ENCODE measurements at regions of chr6 and their contacts with region 1.

Region 1: GRCh38 chr6:36724514-36725390 is 27.1 kb downstream of the RAB44 start:
- DNase-seq: peak; percentile 82
- H3K4me3 Mint-ChIP-seq: no peak overlapping the region
- H3K27ac Mint-ChIP-seq: no peak overlapping the region
- H3K4me1 Mint-ChIP-seq: peaks cover 18% of the 10 kb centered on the region
- H3K27me3 Mint-ChIP-seq: no peaks in the 10 kb centered on the region
- CTCF ChIP-seq: peak; percentile 71

Region 2: DNA sequence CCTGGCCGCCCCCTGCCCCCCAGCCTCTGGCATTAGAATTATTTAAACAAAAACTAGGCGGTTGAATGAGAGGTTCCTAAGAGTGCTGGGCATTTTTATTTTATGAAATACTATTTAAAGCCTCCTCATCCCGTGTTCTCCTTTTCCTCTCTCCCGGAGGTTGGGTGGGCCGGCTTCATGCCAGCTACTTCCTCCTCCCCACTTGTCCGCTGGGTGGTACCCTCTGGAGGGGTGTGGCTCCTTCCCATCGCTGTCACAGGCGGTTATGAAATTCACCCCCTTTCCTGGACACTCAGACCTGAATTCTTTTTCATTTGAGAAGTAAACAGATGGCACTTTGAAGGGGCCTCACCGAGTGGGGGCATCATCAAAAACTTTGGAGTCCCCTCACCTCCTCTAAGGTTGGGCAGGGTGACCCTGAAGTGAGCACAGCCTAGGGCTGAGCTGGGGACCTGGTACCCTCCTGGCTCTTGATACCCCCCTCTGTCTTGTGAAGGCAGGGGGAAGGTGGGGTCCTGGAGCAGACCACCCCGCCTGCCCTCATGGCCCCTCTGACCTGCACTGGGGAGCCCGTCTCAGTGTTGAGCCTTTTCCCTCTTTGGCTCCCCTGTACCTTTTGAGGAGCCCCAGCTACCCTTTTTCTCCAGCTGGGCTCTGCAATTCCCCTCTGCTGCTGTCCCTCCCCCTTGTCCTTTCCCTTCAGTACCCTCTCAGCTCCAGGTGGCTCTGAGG is 38.6 kb before region 1 on chr6:
- CTCF ChIA-PET with region 1: interaction called, 6 read pairs
- POLR2A ChIA-PET with region 1: no interaction called
- intact Hi-C with region 1: loop called (anchors 2 kb)
- DNase-seq: no peak
- H3K4me3 Mint-ChIP-seq: peak overlapping the region; percentile 25
- H3K27ac Mint-ChIP-seq: no peak overlapping the region
- H3K4me1 Mint-ChIP-seq: peaks cover 4% of the 10 kb centered on the region
- H3K27me3 Mint-ChIP-seq: no peaks in the 10 kb centered on the region
- CTCF ChIP-seq: no peak